ENCODE measurements at regions of chr9 and their contacts with region 1.

Region 1: GRCh38 chr9:122526600-122526999 is 493 bp downstream of the OR1N1 start:
- DNase-seq: no peak
- ATAC-seq: no peak
- H3K4me3 ChIP-seq: no peak overlapping the region
- H3K27ac ChIP-seq: no peak overlapping the region
- H3K4me1 ChIP-seq: no peaks in the 10 kb centered on the region
- H3K27me3 ChIP-seq: peaks cover 0 to 12% of the 10 kb centered on the region in 2 donors
- CTCF ChIP-seq: no peak

Region 2: DNA sequence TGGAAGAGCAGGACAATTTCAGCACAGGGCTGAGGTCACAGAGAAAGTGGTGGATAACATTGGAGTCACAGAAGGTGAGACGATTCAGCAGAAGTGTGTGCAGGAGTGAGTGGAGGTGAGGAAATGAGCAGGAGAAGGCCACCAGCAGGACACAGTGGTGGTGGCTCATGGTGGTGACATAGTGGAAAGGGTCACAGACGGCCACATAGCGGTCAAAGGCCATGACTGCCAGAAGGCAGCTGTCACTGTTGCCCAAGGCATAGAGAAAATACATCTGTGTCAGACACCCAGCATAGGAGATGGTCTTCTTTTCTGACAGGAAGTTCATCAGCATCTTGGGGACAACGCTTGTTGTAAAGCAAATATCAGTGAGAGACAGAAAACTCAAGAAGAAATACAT is 41.3 kb after region 1 on chr9:
- intact Hi-C with region 1: no loop called
- DNase-seq: no peak
- ATAC-seq: no peak
- H3K4me3 ChIP-seq: no peak overlapping the region
- H3K27ac ChIP-seq: no peak overlapping the region
- H3K4me1 ChIP-seq: no peaks in the 10 kb centered on the region
- H3K27me3 ChIP-seq: no peaks in the 10 kb centered on the region
- CTCF ChIP-seq: no peak

Region 3: GRCh38 chr9:122580360-122580759 is 53.8 kb after region 1 on chr9:
- intact Hi-C with region 1: loop called in 1 of 2 experiments (anchors 10 kb)
- DNase-seq: no peak
- ATAC-seq: no peak
- H3K4me3 ChIP-seq: no peak overlapping the region
- H3K27ac ChIP-seq: no peak overlapping the region
- H3K4me1 ChIP-seq: no peaks in the 10 kb centered on the region
- H3K27me3 ChIP-seq: no peaks in the 10 kb centered on the region
- CTCF ChIP-seq: no peak

Region 4: DNA sequence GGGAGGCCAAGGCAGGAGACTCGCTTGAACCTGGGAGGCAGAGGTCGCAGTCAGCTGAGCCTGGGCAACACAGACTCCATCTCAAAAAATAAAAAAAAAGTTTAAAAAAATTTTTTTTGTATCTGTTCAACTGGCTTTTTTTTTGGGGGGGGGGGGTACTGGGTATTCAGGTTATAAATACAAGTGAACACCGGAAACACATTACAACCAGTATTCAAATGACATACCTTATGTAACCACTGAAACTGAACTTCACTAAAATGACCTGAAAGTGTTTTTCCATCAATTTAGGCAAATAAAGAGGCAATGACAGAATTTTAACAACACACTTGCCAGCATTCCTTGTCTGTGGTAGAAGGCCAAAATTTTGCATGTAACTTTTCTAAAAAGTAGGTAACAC is 708.3 kb after region 1 on chr9:
- intact Hi-C with region 1: no loop called
- DNase-seq: no peak
- ATAC-seq: no peak
- H3K4me3 ChIP-seq: no peak overlapping the region
- H3K27ac ChIP-seq: no peak overlapping the region
- H3K4me1 ChIP-seq: no peaks in the 10 kb centered on the region
- H3K27me3 ChIP-seq: no peaks in the 10 kb centered on the region
- CTCF ChIP-seq: no peak

Measured in left lung (tissue), 14 donors.